Cardiac septum (tissue), 1 donor: ENCODE measurements at regions of chr1 and their contacts with region 1.

Region 1: GRCh38 chr1:171741872-171742576 is at the start of gene VAMP4:
- DNase-seq: peak; percentile 94
- total RNA-seq, gene VAMP4: 8.7 TPM

Region 2: DNA sequence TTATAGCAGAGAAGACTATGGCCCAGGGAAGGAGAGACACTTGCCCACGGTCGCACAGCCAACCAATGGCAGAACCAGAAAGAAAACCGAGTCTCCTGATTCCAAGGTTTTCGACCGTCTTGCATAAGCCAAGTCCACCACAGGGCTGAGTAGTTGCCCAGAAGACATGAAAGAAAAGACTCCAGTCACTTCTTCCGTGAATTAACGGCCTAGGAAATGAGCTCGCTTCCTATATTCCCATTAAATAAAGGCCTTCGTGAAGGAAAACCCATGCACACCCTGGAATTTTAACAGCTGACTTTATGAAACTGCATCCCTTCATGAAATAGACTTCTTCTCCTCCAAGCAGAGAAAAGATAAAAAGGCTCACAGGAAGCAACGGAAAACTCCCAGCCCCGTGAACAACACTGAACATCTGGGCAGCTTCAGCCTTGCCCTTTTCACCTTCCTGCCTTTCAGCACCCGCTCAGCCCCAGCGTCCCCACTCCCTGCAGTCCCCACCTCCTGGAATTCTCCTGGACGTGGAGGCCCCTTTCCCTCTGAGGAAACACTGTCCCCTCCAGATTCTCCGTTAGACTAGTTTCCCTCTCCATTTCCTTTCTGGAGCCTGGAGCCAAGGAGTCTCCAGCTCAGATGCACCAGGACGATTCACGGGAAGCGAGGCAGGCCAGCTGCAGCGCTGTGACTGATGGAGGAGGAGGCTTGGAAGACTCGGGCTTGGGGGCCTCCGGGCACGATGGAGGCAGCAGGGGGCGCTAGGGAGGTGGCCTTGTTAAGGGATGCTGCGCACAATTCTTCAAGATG is 86.9 kb before region 1 on chr1:
- intact Hi-C with region 1: loop called (anchors 2 kb)
- DNase-seq: peak; percentile 89

Region 3: DNA sequence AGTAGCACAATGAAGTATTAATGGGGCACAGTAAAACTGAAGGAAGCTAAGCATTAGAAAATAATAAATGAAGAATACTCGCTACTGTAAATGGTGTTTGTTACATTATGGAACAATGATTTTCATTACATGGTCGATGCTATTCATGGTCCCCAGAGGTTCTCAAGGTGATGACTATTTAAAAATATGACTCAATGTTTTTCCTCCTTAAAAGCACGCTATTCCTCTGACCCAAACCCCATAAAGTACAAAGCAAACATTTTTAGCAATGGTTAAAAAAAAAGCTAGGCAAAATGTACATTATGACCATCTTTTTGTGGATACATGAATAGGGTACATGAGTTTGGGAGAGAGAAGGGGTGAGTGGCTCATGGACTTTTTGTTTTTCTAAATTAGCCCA is 34.4 kb before region 1 on chr1:
- intact Hi-C with region 1: no loop called
- DNase-seq: no peak

Region 4: GRCh38 chr1:171781176-171781875 is 39.3 kb after region 1 on chr1 and contains the start of gene METTL13:
- intact Hi-C with region 1: loop called (anchors 1 kb)
- DNase-seq: peak; percentile 100
- total RNA-seq, gene METTL13: 14.4 TPM